ENCODE measurements at regions of chr3 and their contacts with region 1.

Region 1: DNA sequence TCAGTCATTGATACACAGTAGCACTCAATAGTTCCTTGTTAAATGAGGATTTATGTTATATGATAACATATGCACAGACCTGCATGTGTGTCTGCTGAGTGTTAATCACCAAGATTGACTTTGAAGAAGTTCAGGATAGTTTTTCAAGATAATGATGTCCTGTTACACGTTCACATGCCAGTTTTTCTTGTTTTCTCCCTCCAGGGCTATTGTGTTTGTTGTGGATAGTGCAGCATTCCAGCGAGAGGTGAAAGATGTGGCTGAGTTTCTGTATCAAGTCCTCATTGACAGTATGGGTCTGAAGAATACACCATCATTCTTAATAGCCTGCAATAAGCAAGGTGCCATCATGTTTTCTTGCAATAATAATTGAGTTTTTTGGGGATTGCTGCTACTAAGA is 9.8 kb downstream of the SRPRB start:
- DNase-seq: no peak
- ATAC-seq: no peak
- H3K4me3 ChIP-seq: no peak overlapping the region
- H3K27ac ChIP-seq: no peak overlapping the region
- H3K4me1 ChIP-seq: no peaks in the 10 kb centered on the region
- H3K27me3 ChIP-seq: no peaks in the 10 kb centered on the region
- CTCF ChIP-seq: no peak

Region 2: DNA sequence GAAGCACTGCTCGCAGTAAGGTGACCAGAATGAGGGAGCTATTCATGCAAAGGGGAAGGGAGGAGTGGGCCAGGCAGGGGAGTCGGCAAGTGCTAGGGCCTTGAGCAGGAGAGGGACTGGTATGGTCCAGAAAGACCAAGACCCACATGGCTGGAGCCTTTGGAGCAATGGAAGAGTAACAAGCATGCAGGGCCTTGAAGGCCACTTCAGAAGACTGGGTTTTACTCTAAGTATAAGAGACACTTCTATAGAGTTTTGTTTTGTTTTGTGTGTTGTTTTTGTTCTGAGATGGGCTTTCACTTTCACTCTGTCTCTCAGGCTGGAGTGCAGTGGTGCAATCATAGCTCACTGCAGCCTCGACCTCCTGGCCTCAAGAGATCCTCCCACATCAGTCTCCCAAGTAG is 373.5 kb before region 1 on chr3:
- intact Hi-C with region 1: no loop called
- DNase-seq: no peak
- ATAC-seq: no peak
- H3K4me3 ChIP-seq: no peak overlapping the region
- H3K27ac ChIP-seq: no peak overlapping the region
- H3K4me1 ChIP-seq: peaks cover 7% of the 10 kb centered on the region
- H3K27me3 ChIP-seq: no peaks in the 10 kb centered on the region
- CTCF ChIP-seq: no peak

Region 3: GRCh38 chr3:133851266-133851906 is 36.0 kb after region 1 on chr3:
- intact Hi-C with region 1: no loop called
- DNase-seq: no peak
- ATAC-seq: no peak
- H3K4me3 ChIP-seq: no peak overlapping the region
- H3K27ac ChIP-seq: no peak overlapping the region
- H3K4me1 ChIP-seq: no peaks in the 10 kb centered on the region
- H3K27me3 ChIP-seq: no peaks in the 10 kb centered on the region
- CTCF ChIP-seq: no peak

Region 4: GRCh38 chr3:133910422-133910821 is 95.0 kb after region 1 on chr3:
- intact Hi-C with region 1: loop called in 1 of 2 experiments (anchors 5 kb)
- DNase-seq: no peak
- ATAC-seq: no peak
- H3K4me3 ChIP-seq: no peak overlapping the region
- H3K27ac ChIP-seq: no peak overlapping the region
- H3K4me1 ChIP-seq: no peaks in the 10 kb centered on the region
- H3K27me3 ChIP-seq: peaks cover 2 to 7% (median 6%) of the 10 kb centered on the region in 3 donors
- CTCF ChIP-seq: no peak

Measured in psoas muscle (tissue), 8 donors.